GM13977 (cell line): ENCODE measurements at regions of chr22 and their contacts with region 1.

Region 1: GRCh38 chr22:39532215-39533071 is at the start of gene RPS19BP1:
- DNase-seq: peak; percentile 98
- CTCF ChIP-seq: no peak

Region 2: GRCh38 chr22:40036591-40037225 is 504.3 kb after region 1 on chr22:
- in situ Hi-C with region 1: loop called (anchors 10 kb)
- DNase-seq: peak; percentile 76
- CTCF ChIP-seq: peak; percentile 86

Region 3: GRCh38 chr22:40352763-40353162 is 820.3 kb after region 1 on chr22:
- in situ Hi-C with region 1: loop called (anchors 10 kb)
- DNase-seq: no peak
- CTCF ChIP-seq: no peak